A549 (cell line): ENCODE measurements at regions of chr10 and their contacts with region 1.

Region 1: GRCh38 chr10:125691160-125691981 is 8.4 kb upstream of the TEX36 start:
- DNase-seq: no peak
- ATAC-seq: no peak
- H3K4me3 ChIP-seq: no peak overlapping the region
- H3K27ac ChIP-seq: no peak overlapping the region
- H3K4me1 ChIP-seq: peaks cover 15% of the 10 kb centered on the region
- CTCF ChIP-seq: no peak
- EP300 ChIP-seq: no peak
- POLR2A ChIP-seq: no peak
- RAD21 ChIP-seq: no peak

Region 2: GRCh38 chr10:125679436-125679835 is 11.9 kb before region 1 on chr10:
- CTCF ChIA-PET with region 1: interaction called, 16 read pairs
- POLR2A ChIA-PET with region 1: no interaction called
- DNase-seq: no peak
- ATAC-seq: no peak
- H3K4me3 ChIP-seq: no peak overlapping the region
- H3K27ac ChIP-seq: no peak overlapping the region
- H3K4me1 ChIP-seq: no peaks in the 10 kb centered on the region
- CTCF ChIP-seq: no peak
- EP300 ChIP-seq: no peak
- POLR2A ChIP-seq: no peak
- RAD21 ChIP-seq: no peak

Region 3: GRCh38 chr10:125812128-125812750 is 120.9 kb after region 1 on chr10:
- CTCF ChIA-PET with region 1: no interaction called
- POLR2A ChIA-PET with region 1: no interaction called
- DNase-seq: peak in 1 of 2 experiments; percentile 22
- ATAC-seq: no peak
- H3K4me3 ChIP-seq: no peak overlapping the region
- H3K27ac ChIP-seq: no peak overlapping the region
- H3K4me1 ChIP-seq: no peaks in the 10 kb centered on the region
- CTCF ChIP-seq: no peak
- EP300 ChIP-seq: no peak
- POLR2A ChIP-seq: no peak
- RAD21 ChIP-seq: no peak